ENCODE measurements at regions of chr1 and their contacts with region 1.

Region 1: GRCh38 chr1:235075188-235075926 is 53.3 kb downstream of the TOMM20 start:
- DNase-seq: peak; percentile 71 to 86
- ATAC-seq: peak; percentile 70 to 85 (median 80)
- H3K4me3 ChIP-seq: peak overlapping the region in 7 of 10 donors; percentile 1 to 31 (median 10)
- H3K27ac ChIP-seq: peak overlapping the region; percentile 85 to 99 (median 96)
- H3K4me1 ChIP-seq: peaks cover 36 to 89% (median 77%) of the 10 kb centered on the region in 9 donors
- H3K27me3 ChIP-seq: no peaks in the 10 kb centered on the region
- CTCF ChIP-seq: no peak

Region 2: DNA sequence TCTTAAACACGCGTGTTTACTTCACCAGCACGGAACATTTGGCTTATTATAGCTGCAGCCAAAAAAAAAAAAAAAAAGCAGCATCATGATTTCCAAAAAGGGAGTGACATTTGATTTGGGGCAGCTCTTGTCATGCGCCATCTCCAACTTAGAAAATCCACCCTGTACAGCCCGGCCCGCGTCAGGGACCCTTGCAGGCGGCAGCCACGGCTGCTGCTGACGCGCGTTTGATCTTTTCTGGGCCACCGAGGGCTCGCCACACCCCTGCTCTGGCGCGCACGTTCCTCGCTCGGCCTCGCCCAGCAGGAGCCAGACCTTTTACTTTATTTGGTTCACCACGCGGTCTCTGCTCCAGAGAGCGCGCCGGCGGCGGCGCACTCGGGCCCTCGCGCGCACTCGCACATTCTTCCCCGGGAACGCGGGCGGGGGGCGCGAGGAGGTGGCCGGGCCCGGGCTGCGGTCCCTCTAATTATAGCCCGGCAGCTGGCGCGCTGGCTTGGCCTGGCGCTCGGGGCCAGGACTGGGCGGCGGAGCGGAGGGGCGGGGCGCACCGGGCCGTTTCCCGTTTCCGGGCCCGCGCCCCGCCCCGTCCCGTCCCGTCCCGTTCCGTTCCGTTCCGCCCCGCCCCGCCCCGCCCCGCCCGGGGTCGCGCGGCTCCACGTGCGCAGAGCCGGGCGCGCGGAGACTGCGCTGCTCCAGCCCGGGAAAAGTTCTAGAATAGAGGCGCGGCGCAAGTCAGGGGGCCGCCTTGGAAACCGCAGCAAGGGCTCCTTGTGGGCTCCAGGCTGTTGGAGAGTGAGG is 475.5 kb before region 1 on chr1:
- intact Hi-C with region 1: loop called in 5 of 10 experiments (anchors 2 to 10 kb)
- DNase-seq: peak; percentile 89 to 91
- ATAC-seq: peak; percentile 82 to 97 (median 91)
- H3K4me3 ChIP-seq: peak overlapping the region in 9 of 10 donors; percentile 29 to 95 (median 51)
- H3K27ac ChIP-seq: peak overlapping the region; percentile 91 to 100 (median 99)
- H3K4me1 ChIP-seq: peaks cover 3 to 70% (median 54%) of the 10 kb centered on the region in 9 donors
- H3K27me3 ChIP-seq: no peaks in the 10 kb centered on the region
- CTCF ChIP-seq: peak in 3 of 9 donors; percentile 22 to 36 (median 25)

Region 3: DNA sequence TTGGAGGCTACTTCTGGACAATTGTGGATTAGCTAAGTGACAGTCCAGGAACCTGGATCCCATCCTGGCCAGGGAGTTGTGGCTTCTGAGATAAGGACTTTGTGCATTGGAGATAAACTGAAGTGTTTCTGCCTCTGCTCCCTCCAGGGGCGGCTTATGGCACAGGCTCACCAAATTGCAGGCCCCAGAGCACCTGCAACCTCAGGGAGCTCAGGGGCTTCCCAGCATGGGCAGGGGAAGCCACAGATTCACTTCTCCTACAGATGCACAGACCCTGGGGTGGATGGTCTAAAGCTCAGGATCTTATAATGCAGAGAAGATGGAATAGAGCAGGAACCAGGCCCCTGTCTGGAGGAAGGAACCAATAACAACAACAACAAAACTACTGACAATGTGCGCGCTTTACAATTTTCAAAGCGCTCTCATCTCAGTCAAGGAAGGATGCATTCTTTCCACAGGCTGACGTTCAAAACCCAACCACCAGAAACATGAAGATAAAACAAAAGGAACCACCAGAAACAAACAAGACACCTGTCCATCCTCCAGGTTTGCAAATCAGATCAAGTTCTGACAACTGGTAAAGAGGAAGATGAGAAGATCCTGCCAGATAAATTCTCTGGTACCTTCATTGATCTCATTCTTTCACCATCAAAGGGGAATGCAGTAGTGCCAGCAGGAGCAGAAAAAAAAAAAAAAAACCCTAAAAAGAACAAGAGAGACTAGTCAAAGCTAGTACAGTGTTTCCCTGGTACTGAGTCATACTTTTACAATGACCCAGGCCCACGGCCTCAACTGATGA is 344.4 kb before region 1 on chr1:
- intact Hi-C with region 1: loop called in 3 of 10 experiments (anchors 5 to 10 kb)
- DNase-seq: no peak
- ATAC-seq: no peak
- H3K4me3 ChIP-seq: no peak overlapping the region
- H3K27ac ChIP-seq: peak overlapping the region in 1 of 10 donors; percentile 62
- H3K4me1 ChIP-seq: peaks cover 17 to 54% (median 32%) of the 10 kb centered on the region in 9 donors
- H3K27me3 ChIP-seq: no peaks in the 10 kb centered on the region
- CTCF ChIP-seq: no peak

Region 4: GRCh38 chr1:234887016-234887900 is 188.1 kb before region 1 on chr1:
- intact Hi-C with region 1: loop called in 4 of 10 experiments (anchors 2 to 10 kb)
- DNase-seq: peak in 1 of 2 donors; percentile 70
- ATAC-seq: peak; percentile 60 to 86 (median 82)
- H3K4me3 ChIP-seq: peak overlapping the region in 1 of 10 donors; percentile 7
- H3K27ac ChIP-seq: peak overlapping the region; percentile 87 to 99 (median 94)
- H3K4me1 ChIP-seq: peaks cover 7 to 49% (median 33%) of the 10 kb centered on the region in 9 donors
- H3K27me3 ChIP-seq: no peaks in the 10 kb centered on the region
- CTCF ChIP-seq: no peak

Region 5: DNA sequence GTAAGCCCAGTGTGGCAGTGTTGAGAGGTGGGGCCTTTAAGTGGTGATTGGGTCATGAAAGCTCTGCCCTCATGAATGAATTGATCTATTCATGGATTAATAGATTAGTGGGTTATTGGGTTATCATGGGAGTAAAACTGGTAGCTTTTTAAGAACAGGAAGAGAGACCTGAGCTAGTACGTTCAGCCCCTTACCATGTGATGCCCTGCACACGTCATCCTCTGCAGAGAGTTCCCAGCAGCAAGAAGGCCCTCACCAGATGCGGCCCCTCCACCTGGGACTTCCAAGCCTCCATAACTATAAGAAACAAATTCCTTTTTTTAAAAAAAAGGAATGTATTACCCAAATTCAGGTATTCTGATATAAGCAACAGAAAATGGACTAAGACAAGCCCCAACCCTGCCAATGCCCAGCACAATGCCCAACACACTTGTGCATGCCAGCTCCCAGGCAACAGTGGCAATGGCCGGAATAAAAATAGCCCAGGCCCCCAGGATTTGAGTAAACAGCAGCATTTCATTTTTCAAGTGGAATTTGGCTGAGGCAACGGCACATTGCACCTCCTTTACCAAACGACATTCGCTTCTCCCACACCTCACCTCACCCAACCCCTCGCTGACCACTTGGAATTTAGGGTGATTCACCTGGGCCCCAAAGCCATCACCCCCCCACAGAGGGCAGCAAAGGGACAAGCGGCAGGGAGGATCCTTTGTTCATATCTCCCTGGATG is 162.6 kb before region 1 on chr1:
- intact Hi-C with region 1: loop called in 5 of 10 experiments (anchors 5 to 10 kb)
- DNase-seq: no peak
- ATAC-seq: peak in 4 of 8 donors; percentile 18 to 34 (median 24)
- H3K4me3 ChIP-seq: no peak overlapping the region
- H3K27ac ChIP-seq: peak overlapping the region; percentile 50 to 85 (median 68)
- H3K4me1 ChIP-seq: peaks cover 17 to 86% (median 61%) of the 10 kb centered on the region in 9 donors
- H3K27me3 ChIP-seq: no peaks in the 10 kb centered on the region
- CTCF ChIP-seq: peak in 7 of 9 donors; percentile 11 to 52 (median 26)

Region 6: GRCh38 chr1:234925440-234926263 is 149.7 kb before region 1 on chr1:
- intact Hi-C with region 1: loop called in 2 of 10 experiments (anchors 5 to 10 kb)
- DNase-seq: no peak
- ATAC-seq: peak in 7 of 8 donors; percentile 34 to 69 (median 65)
- H3K4me3 ChIP-seq: no peak overlapping the region
- H3K27ac ChIP-seq: peak overlapping the region in 9 of 10 donors; percentile 33 to 75 (median 59)
- H3K4me1 ChIP-seq: peaks cover 10 to 64% (median 45%) of the 10 kb centered on the region in 9 donors
- H3K27me3 ChIP-seq: no peaks in the 10 kb centered on the region
- CTCF ChIP-seq: no peak

Region 7: GRCh38 chr1:234987415-234988154 is 87.8 kb before region 1 on chr1:
- intact Hi-C with region 1: loop called in 5 of 10 experiments (anchors 5 kb)
- DNase-seq: peak; percentile 58 to 82
- ATAC-seq: peak; percentile 74 to 93 (median 90)
- H3K4me3 ChIP-seq: no peak overlapping the region
- H3K27ac ChIP-seq: peak overlapping the region; percentile 77 to 98 (median 88)
- H3K4me1 ChIP-seq: peaks cover 18 to 66% (median 44%) of the 10 kb centered on the region in 9 donors
- H3K27me3 ChIP-seq: no peaks in the 10 kb centered on the region
- CTCF ChIP-seq: no peak

Region 8: DNA sequence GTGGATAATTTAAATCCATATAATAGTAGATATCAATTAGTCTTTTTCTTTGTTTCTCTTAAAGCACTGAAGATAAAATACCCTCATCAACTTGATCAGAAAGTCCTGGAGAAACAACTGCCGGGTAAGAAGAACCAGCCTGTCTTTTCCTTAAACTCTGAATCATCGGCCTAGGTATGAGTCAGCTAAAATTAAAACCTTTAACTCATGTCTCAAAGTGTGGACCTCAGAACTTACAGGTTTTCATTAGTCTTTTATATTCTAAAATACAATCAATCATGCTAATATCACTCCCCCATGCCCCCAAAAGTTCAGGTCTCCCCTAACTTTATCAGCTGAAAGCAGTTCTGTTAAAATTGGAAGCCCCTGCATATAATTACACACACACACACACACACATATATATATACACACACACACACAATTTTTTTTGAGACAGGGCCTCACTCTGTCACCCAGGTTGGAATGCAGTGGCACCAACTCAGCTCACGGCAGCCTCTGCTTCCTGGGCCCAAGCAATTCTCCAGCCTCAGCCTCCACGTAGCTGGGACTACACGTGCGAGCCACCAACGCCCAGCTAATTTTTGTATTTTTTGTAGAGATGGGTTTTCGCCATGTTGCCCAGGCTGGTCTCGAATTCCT is 367.6 kb after region 1 on chr1:
- intact Hi-C with region 1: no loop called
- DNase-seq: no peak
- ATAC-seq: no peak
- H3K4me3 ChIP-seq: no peak overlapping the region
- H3K27ac ChIP-seq: peak overlapping the region in 2 of 10 donors; percentile 24 to 26
- H3K4me1 ChIP-seq: no peaks in the 10 kb centered on the region
- H3K27me3 ChIP-seq: no peaks in the 10 kb centered on the region
- CTCF ChIP-seq: no peak

Region 9: GRCh38 chr1:235552146-235552716 is 476.9 kb after region 1 on chr1:
- intact Hi-C with region 1: no loop called
- DNase-seq: peak; percentile 15 to 43
- ATAC-seq: peak in 7 of 8 donors; percentile 42 to 78 (median 67)
- H3K4me3 ChIP-seq: no peak overlapping the region
- H3K27ac ChIP-seq: peak overlapping the region in 1 of 10 donors; percentile 3
- H3K4me1 ChIP-seq: peaks cover 0 to 3% (median 0%) of the 10 kb centered on the region in 9 donors
- H3K27me3 ChIP-seq: peaks cover 0 to 3% (median 0%) of the 10 kb centered on the region in 7 donors
- CTCF ChIP-seq: no peak

Measured in heart right ventricle (tissue), 16 donors.